CD8-positive, alpha-beta memory T cell (primary cell): ENCODE measurements at regions of chr10 and their contacts with region 1.

Region 1: GRCh38 chr10:16777473-16778370 is 39.5 kb downstream of the RSU1 start:
- DNase-seq: peak in 2 of 5 donors; percentile 47 to 50
- H3K4me3 ChIP-seq: no peak overlapping the region
- H3K4me3 Mint-ChIP-seq: peak overlapping the region in 1 of 7 donors; percentile 43
- H3K27ac ChIP-seq: no peak overlapping the region
- H3K27ac Mint-ChIP-seq: peak overlapping the region; percentile 58 to 93 (median 88)
- H3K4me1 ChIP-seq: peaks cover 14% of the 10 kb centered on the region
- H3K4me1 Mint-ChIP-seq: peaks cover 29 to 39% (median 36%) of the 10 kb centered on the region in 3 donors
- H3K27me3 ChIP-seq: no peaks in the 10 kb centered on the region
- H3K27me3 Mint-ChIP-seq: no peaks in the 10 kb centered on the region

Region 2: DNA sequence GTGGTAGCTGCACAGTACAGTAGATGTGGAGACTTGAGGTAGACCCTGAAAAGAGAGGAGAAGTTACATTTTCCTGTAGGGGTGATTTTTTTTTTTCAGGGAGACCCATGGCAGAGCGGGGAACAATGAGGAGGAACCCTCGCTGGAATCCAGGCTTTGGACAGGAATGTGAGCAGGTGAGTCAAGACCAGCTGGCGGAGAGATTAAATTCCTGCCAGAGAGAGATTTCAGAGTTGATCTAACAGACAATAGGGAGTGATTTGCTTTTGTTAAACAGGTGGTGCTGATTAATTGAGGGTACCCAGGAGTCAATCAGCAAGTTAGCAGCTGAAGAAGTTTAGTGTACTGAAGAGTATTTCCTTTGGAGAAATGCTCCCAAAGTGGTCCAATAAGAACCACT is 875.8 kb before region 1 on chr10:
- CTCF ChIA-PET with region 1: interaction called, 10 read pairs
- POLR2A ChIA-PET with region 1: no interaction called
- DNase-seq: no peak
- H3K4me3 ChIP-seq: no peak overlapping the region
- H3K4me3 Mint-ChIP-seq: no peak overlapping the region
- H3K27ac ChIP-seq: no peak overlapping the region
- H3K27ac Mint-ChIP-seq: no peak overlapping the region
- H3K4me1 ChIP-seq: no peaks in the 10 kb centered on the region
- H3K4me1 Mint-ChIP-seq: no peaks in the 10 kb centered on the region
- H3K27me3 ChIP-seq: peaks cover 6% of the 10 kb centered on the region
- H3K27me3 Mint-ChIP-seq: peaks cover 14 to 34% of the 10 kb centered on the region in 2 donors

Region 3: DNA sequence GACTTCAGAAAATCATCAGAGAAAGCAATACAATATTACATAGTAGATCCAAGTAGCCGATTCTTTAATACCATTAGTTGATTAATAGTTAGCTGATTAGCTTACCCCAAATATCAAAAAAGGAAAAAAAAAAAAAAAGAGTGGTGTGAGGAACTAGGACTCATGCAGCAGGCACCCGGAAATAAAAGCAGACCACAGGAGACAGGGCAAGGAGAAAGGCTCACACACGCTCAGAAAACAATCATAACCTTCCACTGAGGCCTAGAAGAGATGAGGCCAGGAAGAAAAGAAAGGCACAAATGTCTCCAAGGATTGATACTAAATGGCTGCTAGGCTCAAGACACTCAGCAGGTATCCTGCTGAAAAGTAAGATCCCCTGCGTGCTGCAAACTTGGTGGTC is 397.8 kb after region 1 on chr10:
- CTCF ChIA-PET with region 1: no interaction called
- POLR2A ChIA-PET with region 1: no interaction called
- DNase-seq: peak in 1 of 5 donors; percentile 7
- H3K4me3 ChIP-seq: no peak overlapping the region
- H3K4me3 Mint-ChIP-seq: peak overlapping the region; percentile 3 to 74 (median 42)
- H3K27ac ChIP-seq: no peak overlapping the region
- H3K27ac Mint-ChIP-seq: peak overlapping the region in 7 of 8 donors; percentile 42 to 86 (median 71)
- H3K4me1 ChIP-seq: peaks cover 6% of the 10 kb centered on the region
- H3K4me1 Mint-ChIP-seq: peaks cover 8 to 18% (median 16%) of the 10 kb centered on the region in 3 donors
- H3K27me3 ChIP-seq: no peaks in the 10 kb centered on the region
- H3K27me3 Mint-ChIP-seq: no peaks in the 10 kb centered on the region